Ascending aorta (tissue), 2 donors: ENCODE measurements at regions of chr5 and their contacts with region 1.

Region 1: DNA sequence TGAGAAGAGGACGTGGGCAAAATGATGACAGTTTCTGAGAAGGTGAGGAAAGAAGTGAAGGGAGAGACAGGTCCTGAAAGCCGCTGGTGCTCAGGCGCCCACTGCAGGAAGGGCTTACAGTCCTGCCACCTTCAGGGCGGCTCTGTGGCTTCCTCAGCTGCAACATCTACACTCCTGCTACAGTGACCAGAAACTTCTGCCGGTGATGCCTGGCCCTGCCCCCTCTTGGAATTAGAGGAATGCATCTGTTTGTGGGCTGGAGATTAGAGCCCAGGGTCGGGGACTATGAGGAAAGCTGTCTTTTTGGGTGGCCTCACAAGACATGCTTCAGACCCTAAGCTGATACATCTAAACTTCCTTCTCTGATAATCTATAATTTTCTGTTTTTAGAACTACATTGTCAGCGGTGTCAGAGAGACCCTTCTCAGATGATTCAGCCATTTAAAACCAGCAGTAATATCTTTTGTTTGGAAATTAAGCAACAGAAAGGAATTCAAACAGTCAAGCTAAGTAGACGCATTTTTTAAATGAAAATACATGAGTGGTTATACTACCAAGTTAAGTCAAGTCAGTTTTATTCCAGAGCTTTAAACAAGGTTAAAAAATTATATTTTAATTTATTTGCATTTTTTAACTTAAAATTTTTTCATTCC is 30.4 kb downstream of the PRDM6 start:
- DNase-seq: no peak
- H3K4me3 ChIP-seq: peak overlapping the region in 1 of 2 donors; percentile 23
- H3K27ac ChIP-seq: peak overlapping the region; percentile 84 to 90
- H3K4me1 ChIP-seq: peaks cover 3 to 69% of the 10 kb centered on the region in 2 donors
- H3K27me3 ChIP-seq: no peaks in the 10 kb centered on the region
- CTCF ChIP-seq: peak in 1 of 3 experiments; percentile 48

Region 2: GRCh38 chr5:123150089-123150488 is 30.6 kb after region 1 on chr5:
- intact Hi-C with region 1: loop called (anchors 5 kb)
- DNase-seq: no peak
- H3K4me3 ChIP-seq: no peak overlapping the region
- H3K27ac ChIP-seq: peak overlapping the region; percentile 74 to 79
- H3K4me1 ChIP-seq: peaks cover 13 to 47% of the 10 kb centered on the region in 2 donors
- H3K27me3 ChIP-seq: no peaks in the 10 kb centered on the region
- CTCF ChIP-seq: no peak